Head of caudate nucleus (tissue), 42 donors: ENCODE measurements at regions of chr17 and their contacts with region 1.

Region 1: DNA sequence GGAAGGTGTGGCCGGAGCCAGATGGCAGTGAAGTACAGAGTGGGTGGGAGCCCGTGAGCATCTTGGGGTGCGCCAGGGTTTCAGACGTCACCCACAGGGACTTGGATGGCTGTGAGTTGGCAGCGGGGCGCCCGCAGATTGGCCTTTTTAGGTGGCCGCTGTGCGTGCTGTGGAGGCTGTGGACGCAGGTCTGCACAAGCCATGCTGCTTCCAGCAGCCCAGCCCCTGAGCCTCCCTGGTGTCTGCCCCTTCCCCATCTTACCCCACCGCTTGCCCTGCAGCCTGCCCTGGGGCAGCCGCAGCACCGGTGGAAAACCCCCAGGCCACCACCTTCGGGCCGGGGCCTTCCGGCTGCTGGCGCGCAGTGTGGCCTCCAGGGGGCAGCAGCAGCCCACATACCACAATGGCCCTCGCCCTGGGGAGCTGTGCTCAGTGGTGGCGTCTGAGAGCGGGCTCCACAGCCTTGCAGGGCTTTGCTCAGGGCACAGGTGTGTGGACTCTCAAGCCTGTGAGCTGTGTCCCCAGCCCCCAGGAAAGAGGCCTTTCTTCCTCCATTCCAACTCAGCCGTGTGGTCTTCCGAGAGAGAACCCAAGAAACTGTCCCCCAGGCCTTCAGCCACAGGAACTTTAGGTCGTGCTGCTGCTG is 11.8 kb downstream of the ENDOV start:
- DNase-seq: peak; percentile 54 to 90 (median 78)

Region 2: DNA sequence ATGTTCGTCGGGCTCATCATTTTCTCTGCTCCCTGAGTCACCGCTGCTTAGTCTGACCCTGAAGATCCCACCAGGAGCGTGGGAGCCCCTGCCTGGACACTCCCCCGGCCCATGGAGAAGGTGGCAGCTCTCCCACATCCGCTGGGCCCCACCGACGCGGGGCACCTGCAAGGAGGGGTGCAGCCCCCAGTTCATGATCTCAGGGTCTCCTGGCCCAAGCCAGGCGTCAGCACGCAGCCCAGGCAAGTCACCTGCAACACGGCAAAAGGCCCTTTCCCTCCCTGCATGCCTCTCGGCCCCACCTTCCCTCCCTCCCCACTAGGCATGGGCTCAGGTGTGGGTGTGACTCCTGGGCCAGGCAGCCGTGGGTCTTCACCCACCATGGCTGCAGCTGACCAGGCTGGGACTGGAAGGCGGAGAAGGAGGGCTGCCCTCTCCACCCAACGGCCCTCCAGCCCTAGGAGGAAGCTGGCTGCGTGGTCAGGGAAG is 555.2 kb after region 1 on chr17:
- intact Hi-C with region 1: loop called (anchors 2 kb)
- DNase-seq: no peak